Activated B cell treated with CpG ODN at 0.5 μM for 24 hours (primary cell): ENCODE measurements at regions of chr22 and their contacts with region 1.

Region 1: GRCh38 chr22:42863349-42863961 is 6.4 kb upstream of the ARFGAP3 start:
- DNase-seq: no peak
- ATAC-seq: peak; percentile 60
- H3K4me3 Mint-ChIP-seq: peak overlapping the region; percentile 64
- H3K27ac Mint-ChIP-seq: peak overlapping the region; percentile 96
- H3K4me1 Mint-ChIP-seq: peaks cover 45% of the 10 kb centered on the region
- H3K27me3 Mint-ChIP-seq: no peaks in the 10 kb centered on the region
- CTCF ChIP-seq: no peak

Region 2: DNA sequence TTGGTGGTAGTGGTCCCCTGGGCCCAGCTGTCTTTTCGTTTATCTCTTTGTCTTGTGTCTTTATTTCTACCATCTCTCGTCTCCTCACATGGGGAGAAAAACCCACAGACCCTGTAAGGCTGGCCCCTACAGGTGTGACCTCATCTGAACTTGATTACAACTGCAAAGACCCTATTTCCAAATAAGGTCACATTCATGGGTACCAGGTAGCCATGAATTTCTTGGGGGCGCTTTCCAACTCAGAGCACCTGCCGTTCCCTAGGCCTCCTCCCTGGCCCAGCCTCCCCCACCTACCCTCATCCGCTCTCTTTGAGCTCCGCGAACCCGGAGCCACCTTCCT is 329.8 kb before region 1 on chr22:
- CTCF ChIA-PET with region 1: interaction called, 4 read pairs
- POLR2A ChIA-PET with region 1: interaction called, 5 read pairs
- intact Hi-C with region 1: loop called (anchors 10 kb)
- DNase-seq: no peak
- ATAC-seq: no peak
- H3K4me3 Mint-ChIP-seq: peak overlapping the region; percentile 81
- H3K27ac Mint-ChIP-seq: peak overlapping the region; percentile 94
- H3K4me1 Mint-ChIP-seq: peaks cover 66% of the 10 kb centered on the region
- H3K27me3 Mint-ChIP-seq: no peaks in the 10 kb centered on the region
- CTCF ChIP-seq: no peak

Region 3: GRCh38 chr22:42780070-42780540 is 83.3 kb before region 1 on chr22:
- CTCF ChIA-PET with region 1: interaction called, 7 read pairs
- POLR2A ChIA-PET with region 1: no interaction called
- intact Hi-C with region 1: loop called (anchors 1 kb)
- DNase-seq: no peak
- ATAC-seq: peak; percentile 80
- H3K4me3 Mint-ChIP-seq: no peak overlapping the region
- H3K27ac Mint-ChIP-seq: no peak overlapping the region
- H3K4me1 Mint-ChIP-seq: peaks cover 2% of the 10 kb centered on the region
- H3K27me3 Mint-ChIP-seq: no peaks in the 10 kb centered on the region
- CTCF ChIP-seq: peak; percentile 31

Region 4: GRCh38 chr22:42967933-42968332 is 104.5 kb after region 1 on chr22:
- CTCF ChIA-PET with region 1: interaction called, 26 read pairs
- POLR2A ChIA-PET with region 1: interaction called, 4 read pairs
- intact Hi-C with region 1: loop called (anchors 1 kb)
- DNase-seq: no peak
- ATAC-seq: peak; percentile 40
- H3K4me3 Mint-ChIP-seq: no peak overlapping the region
- H3K27ac Mint-ChIP-seq: peak overlapping the region; percentile 46
- H3K4me1 Mint-ChIP-seq: peaks cover 54% of the 10 kb centered on the region
- H3K27me3 Mint-ChIP-seq: no peaks in the 10 kb centered on the region
- CTCF ChIP-seq: no peak

Region 5: DNA sequence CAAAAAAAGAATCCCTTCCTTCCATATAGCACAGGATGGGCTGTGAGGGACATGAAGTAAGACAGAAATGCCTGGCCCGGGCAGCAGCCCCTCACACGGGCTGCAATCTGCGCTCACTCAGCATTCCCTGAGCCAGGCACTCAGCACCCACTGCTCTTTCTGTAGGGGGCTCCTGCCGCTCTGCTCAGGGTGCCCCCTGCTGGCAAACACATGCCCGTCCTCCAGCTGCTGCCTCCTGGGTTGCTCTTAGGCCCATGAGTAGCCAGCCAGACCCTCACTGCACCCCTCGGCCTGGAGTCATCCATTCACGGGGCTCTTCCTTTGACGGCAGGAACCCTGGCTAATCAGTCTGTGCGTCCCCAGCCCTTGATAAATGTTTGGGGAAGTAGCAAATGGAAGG is 272.8 kb after region 1 on chr22:
- CTCF ChIA-PET with region 1: interaction called, 3 read pairs
- POLR2A ChIA-PET with region 1: no interaction called
- intact Hi-C with region 1: loop called (anchors 1 kb)
- DNase-seq: peak; percentile 54
- ATAC-seq: peak; percentile 94
- H3K4me3 Mint-ChIP-seq: no peak overlapping the region
- H3K27ac Mint-ChIP-seq: no peak overlapping the region
- H3K4me1 Mint-ChIP-seq: peaks cover 7% of the 10 kb centered on the region
- H3K27me3 Mint-ChIP-seq: no peaks in the 10 kb centered on the region
- CTCF ChIP-seq: no peak